Activated B cell treated with CpG ODN at 0.5 μM for 24 hours (primary cell): ENCODE measurements at regions of chr12 and their contacts with region 1.

Region 1: DNA sequence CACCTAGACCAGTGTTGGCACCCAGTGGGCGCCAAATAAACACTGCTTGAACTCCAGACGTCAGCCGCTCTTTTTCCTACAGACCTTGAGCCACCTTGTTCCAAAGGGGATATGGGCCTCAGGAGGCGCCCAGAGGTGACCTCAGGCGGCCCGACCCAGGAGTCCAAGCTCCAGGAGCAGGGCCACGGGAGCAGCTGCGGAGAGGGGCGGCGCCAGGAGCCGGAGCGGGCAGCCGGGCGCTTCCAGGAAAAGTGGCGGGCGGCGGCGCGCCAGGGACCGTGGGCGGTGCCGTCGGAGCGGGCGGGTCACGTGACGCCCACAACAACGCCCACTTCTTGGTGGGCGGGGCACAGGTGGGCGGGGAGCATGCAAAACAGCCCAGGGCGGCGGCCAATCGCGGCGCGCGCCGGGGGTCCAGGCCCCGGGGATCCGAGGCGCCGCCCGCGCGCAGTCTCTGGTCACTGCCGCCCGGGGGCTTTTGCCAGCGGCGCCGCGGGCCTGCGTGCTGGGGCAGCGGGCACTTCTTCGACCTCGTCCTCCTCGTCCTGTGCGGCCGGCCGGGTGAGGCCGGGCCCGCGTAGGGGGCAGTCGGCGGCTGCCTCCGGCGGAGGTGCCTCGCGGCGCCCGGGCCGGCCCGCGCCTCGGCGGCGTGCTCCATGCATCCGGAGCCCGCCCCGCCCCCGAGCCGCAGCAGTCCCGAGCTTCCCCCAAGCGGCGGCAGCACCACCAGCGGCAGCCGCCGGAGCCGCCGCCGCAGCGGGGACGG is at the start of gene ORAI1:
- DNase-seq: peak; percentile 98
- ATAC-seq: peak; percentile 70
- H3K4me3 Mint-ChIP-seq: peak within 1 kb of the TSS; percentile 94
- H3K27ac Mint-ChIP-seq: peak within 1 kb of the TSS; percentile 96
- H3K4me1 Mint-ChIP-seq: peaks cover 53% of the 10 kb centered on the region
- H3K27me3 Mint-ChIP-seq: no peaks in the 10 kb centered on the region
- CTCF ChIP-seq: no peak
- total RNA-seq, gene ORAI1: 85.8 and 86.3 TPM in 2 replicates

Region 2: GRCh38 chr12:121499929-121500793 is 126.1 kb before region 1 on chr12:
- CTCF ChIA-PET with region 1: interaction called, 10 read pairs
- POLR2A ChIA-PET with region 1: interaction called, 8 read pairs
- intact Hi-C with region 1: loop called (anchors 1 kb)
- DNase-seq: peak; percentile 69
- ATAC-seq: peak; percentile 82
- H3K4me3 Mint-ChIP-seq: no peak overlapping the region
- H3K27ac Mint-ChIP-seq: no peak overlapping the region
- H3K4me1 Mint-ChIP-seq: peaks cover 17% of the 10 kb centered on the region
- H3K27me3 Mint-ChIP-seq: no peaks in the 10 kb centered on the region
- CTCF ChIP-seq: peak; percentile 82

Region 3: DNA sequence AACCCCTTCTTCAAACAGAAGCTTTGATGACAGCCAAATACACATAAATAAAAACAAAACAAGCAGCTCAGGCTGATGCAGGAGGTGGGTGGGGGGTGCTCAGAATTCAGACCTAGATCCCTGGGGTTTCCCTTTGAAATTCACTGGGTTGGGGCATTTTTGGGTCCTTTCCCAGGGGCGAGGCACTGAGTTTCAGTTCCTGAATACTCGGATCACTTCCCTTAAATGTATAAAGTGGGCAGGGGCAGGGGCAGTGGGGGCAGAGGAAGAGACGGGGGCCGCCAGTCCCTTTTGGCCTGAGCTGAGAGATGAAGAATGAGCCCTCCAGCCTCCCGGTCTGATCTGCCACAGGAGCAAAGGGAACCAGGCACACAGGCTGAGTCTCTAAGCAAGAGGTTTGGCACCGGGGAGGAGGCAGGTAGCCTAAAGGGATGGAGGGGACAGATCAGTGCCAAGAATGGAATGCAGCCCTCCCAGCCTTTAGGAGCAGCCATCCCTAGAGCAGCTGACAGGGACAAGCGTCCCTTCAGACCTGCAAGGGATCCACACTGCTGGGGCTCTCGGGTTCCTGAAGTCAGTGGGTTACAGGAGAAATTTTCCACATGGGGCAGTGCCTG is 65.8 kb before region 1 on chr12:
- CTCF ChIA-PET with region 1: interaction called, 168 read pairs
- POLR2A ChIA-PET with region 1: interaction called, 138 read pairs
- intact Hi-C with region 1: loop called (anchors 1 kb)
- DNase-seq: peak; percentile 58
- ATAC-seq: peak; percentile 79
- H3K4me3 Mint-ChIP-seq: peak overlapping the region; percentile 84
- H3K27ac Mint-ChIP-seq: peak overlapping the region; percentile 97
- H3K4me1 Mint-ChIP-seq: peaks cover 55% of the 10 kb centered on the region
- H3K27me3 Mint-ChIP-seq: no peaks in the 10 kb centered on the region
- CTCF ChIP-seq: no peak

Region 4: GRCh38 chr12:121637231-121637914 is 11.1 kb after region 1 on chr12:
- CTCF ChIA-PET with region 1: interaction called, 5 read pairs
- POLR2A ChIA-PET with region 1: interaction called, 88 read pairs
- intact Hi-C with region 1: no loop called
- DNase-seq: peak; percentile 52
- ATAC-seq: peak; percentile 88
- H3K4me3 Mint-ChIP-seq: peak overlapping the region; percentile 53
- H3K27ac Mint-ChIP-seq: peak overlapping the region; percentile 84
- H3K4me1 Mint-ChIP-seq: peaks cover 50% of the 10 kb centered on the region
- H3K27me3 Mint-ChIP-seq: no peaks in the 10 kb centered on the region
- CTCF ChIP-seq: no peak

Region 5: DNA sequence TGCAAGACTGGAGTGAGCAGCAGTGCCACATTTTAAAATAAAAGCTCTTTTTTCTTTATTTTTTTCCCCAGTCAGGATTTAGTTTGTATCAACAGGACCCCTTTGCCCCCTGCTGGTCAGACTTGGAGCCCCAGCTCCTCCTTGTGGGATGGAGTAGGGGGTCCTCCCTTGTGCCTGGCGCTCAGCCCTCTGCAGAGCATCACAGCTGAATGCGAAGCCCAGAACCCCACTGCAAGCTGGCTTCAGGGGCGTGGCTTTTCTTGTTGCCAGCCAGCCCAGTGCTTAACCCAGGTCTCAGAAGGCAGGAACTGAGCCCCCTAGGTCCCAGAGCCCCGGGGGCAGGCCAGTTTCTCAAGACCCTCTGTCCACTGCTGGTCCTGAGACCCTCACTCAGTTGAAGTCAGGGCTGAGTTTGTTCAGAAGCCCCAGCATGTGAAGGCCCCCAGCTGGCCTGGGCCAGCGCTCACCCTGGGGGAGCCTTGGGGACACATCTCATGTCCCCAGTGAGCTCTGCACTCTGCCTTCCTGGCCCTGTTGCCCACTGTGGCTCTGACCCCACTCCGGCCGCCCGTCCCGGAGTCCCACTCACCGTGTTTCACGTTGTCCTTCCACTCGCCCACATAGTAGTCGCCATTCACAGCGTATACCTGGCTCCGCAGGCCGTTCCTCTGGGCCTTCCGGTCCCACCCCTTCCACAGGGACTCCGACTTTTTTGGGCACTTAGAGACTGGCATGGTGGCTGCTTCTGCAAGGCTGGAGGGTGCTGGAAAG is 42.7 kb after region 1 on chr12:
- CTCF ChIA-PET with region 1: interaction called, 31 read pairs
- POLR2A ChIA-PET with region 1: interaction called, 63 read pairs
- intact Hi-C with region 1: loop called (anchors 1 kb)
- DNase-seq: peak; percentile 38
- ATAC-seq: no peak
- H3K4me3 Mint-ChIP-seq: no peak overlapping the region
- H3K27ac Mint-ChIP-seq: peak overlapping the region; percentile 14
- H3K4me1 Mint-ChIP-seq: peaks cover 49% of the 10 kb centered on the region
- H3K27me3 Mint-ChIP-seq: no peaks in the 10 kb centered on the region
- CTCF ChIP-seq: no peak

Region 6: GRCh38 chr12:121787063-121788025 is 161.1 kb after region 1 on chr12:
- CTCF ChIA-PET with region 1: no interaction called
- POLR2A ChIA-PET with region 1: interaction called, 4 read pairs
- intact Hi-C with region 1: loop called (anchors 1 kb)
- DNase-seq: no peak
- ATAC-seq: no peak
- H3K4me3 Mint-ChIP-seq: peak overlapping the region; percentile 65
- H3K27ac Mint-ChIP-seq: peak overlapping the region; percentile 99
- H3K4me1 Mint-ChIP-seq: peaks cover 95% of the 10 kb centered on the region
- H3K27me3 Mint-ChIP-seq: no peaks in the 10 kb centered on the region
- CTCF ChIP-seq: no peak